ENCODE measurements at regions of chr7 and their contacts with region 1.

Region 1: DNA sequence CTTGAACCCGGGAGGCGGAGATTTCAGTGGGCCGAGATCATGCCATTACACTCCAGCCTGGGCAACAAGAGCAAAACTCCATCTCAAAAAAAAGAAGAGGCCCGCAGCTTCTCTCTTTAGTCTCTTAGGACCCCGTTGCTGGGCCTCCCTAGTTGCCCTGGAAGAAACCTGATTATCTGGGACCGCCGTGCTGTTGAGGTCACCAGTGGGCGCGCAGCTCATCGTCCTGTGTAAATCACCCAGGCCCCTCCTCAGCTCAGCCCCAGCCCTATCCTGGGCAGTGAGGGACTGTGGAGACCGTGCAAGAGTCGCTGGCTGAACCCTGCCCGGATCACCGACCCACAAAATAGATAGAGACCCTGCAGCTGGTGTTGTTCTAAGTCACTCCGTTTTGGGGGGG is 85.0 kb downstream of the UNCX start:
- DNase-seq: no peak
- ATAC-seq: no peak
- H3K4me3 ChIP-seq: no peak overlapping the region
- H3K27ac ChIP-seq: no peak overlapping the region
- H3K4me1 ChIP-seq: no peaks in the 10 kb centered on the region
- H3K27me3 ChIP-seq: peaks cover 14 to 36% (median 23%) of the 10 kb centered on the region in 3 donors
- CTCF ChIP-seq: no peak
- POLR2A ChIP-seq: no peak

Region 2: GRCh38 chr7:1289666-1290025 is 28.0 kb before region 1 on chr7:
- in situ Hi-C with region 1: no loop called
- intact Hi-C with region 1: loop called (anchors 2 kb)
- DNase-seq: no peak
- ATAC-seq: no peak
- H3K4me3 ChIP-seq: peak overlapping the region in 3 of 4 donors; percentile 32 to 49 (median 40)
- H3K27ac ChIP-seq: no peak overlapping the region
- H3K4me1 ChIP-seq: peaks cover 0 to 5% of the 10 kb centered on the region in 2 donors
- H3K27me3 ChIP-seq: peaks cover 29 to 48% (median 45%) of the 10 kb centered on the region in 3 donors
- CTCF ChIP-seq: no peak
- POLR2A ChIP-seq: no peak

Region 3: GRCh38 chr7:1742555-1743303 is 425.1 kb after region 1 on chr7:
- in situ Hi-C with region 1: no loop called
- intact Hi-C with region 1: no loop called
- DNase-seq: no peak
- ATAC-seq: no peak
- H3K4me3 ChIP-seq: peak overlapping the region in 1 of 4 donors; percentile 9
- H3K27ac ChIP-seq: no peak overlapping the region
- H3K4me1 ChIP-seq: no peaks in the 10 kb centered on the region
- H3K27me3 ChIP-seq: no peaks in the 10 kb centered on the region
- CTCF ChIP-seq: no peak
- POLR2A ChIP-seq: no peak